H1 (cell line): ENCODE measurements at regions of chr1 and their contacts with region 1.

Region 1: DNA sequence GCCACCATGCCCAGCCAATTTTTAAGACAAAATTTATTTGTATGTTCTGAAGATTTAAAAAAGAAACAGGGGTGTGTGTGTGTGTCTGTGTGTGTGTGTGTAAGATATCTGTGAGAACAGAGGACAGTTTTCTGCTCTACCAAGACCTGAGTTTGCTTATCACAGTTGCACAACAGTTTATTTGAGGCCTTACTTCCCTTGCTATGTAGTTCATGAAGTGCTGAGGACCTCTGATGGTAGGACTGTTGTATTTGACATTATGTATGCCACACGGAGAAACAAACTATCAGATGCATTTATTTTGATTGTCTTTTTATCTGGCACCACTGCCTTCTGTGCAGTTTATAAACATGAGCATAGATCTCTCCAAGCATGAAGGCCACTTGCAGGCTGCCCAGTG is 355.2 kb downstream of the PBX1 start:
- DNase-seq: no peak
- H3K4me3 ChIP-seq: no peak overlapping the region
- H3K27ac ChIP-seq: no peak overlapping the region
- H3K4me1 ChIP-seq: no peaks in the 10 kb centered on the region
- H3K27me3 ChIP-seq: no peaks in the 10 kb centered on the region
- CTCF ChIP-seq: peak in 1 of 3 experiments; percentile 30; a peak in 1 of 4 replicates
- EP300 ChIP-seq: no peak
- POLR2A ChIP-seq: no peak
- RAD21 ChIP-seq: peak; percentile 45 to 55

Region 2: DNA sequence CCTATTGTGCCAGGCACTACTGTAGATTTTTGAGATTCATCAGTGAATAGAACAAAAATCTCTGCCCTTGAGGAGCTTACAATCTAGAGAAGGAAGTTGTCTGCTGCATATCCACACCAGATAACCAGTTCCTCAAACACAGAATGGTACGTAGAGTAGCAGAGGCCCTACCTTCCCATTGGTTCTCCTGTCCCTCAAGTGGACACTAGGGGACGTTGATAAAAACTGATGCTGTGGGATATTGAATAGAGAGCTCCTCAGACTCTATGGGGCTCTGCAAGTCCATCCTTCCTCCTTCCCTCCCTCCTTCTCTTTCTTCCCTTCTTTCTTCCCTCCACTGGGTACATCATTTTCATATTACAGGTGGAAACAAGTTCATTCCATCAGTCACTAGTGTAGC is 16.0 kb after region 1 on chr1:
- CTCF ChIA-PET with region 1: interaction called, 12 read pairs
- POLR2A ChIA-PET with region 1: interaction called, 3 read pairs
- DNase-seq: no peak
- H3K4me3 ChIP-seq: no peak overlapping the region
- H3K27ac ChIP-seq: no peak overlapping the region
- H3K4me1 ChIP-seq: no peaks in the 10 kb centered on the region; a peak in 1 of 7 replicates
- H3K27me3 ChIP-seq: no peaks in the 10 kb centered on the region
- CTCF ChIP-seq: peak in 1 of 3 experiments; percentile 13; a peak in 1 of 4 replicates
- EP300 ChIP-seq: no peak
- POLR2A ChIP-seq: no peak
- RAD21 ChIP-seq: peak in 1 of 2 experiments; percentile 5; a peak in 2 of 4 replicates